HCT116 (cell line): ENCODE measurements at regions of chr11 and their contacts with region 1.

Region 1: GRCh38 chr11:73965076-73965860 is 14.4 kb downstream of the DNAJB13 start:
- DNase-seq: no peak
- ATAC-seq: no peak
- H3K4me3 ChIP-seq: no peak overlapping the region
- H3K27ac ChIP-seq: no peak overlapping the region
- H3K4me1 ChIP-seq: peaks cover 0 to 5% of the 10 kb centered on the region in 2 experiments; a peak in 2 of 4 replicates
- H3K27me3 ChIP-seq: no peaks in the 10 kb centered on the region
- CTCF ChIP-seq: no peak
- POLR2A ChIP-seq: no peak
- RAD21 ChIP-seq: no peak

Region 2: GRCh38 chr11:74090701-74091100 is 125.4 kb after region 1 on chr11:
- CTCF ChIA-PET with region 1: no interaction called
- POLR2A ChIA-PET with region 1: no interaction called
- RAD21 ChIA-PET with region 1: no interaction called
- intact Hi-C with region 1: loop called (anchors 5 kb)
- DNase-seq: no peak
- ATAC-seq: no peak
- H3K4me3 ChIP-seq: no peak overlapping the region
- H3K27ac ChIP-seq: no peak overlapping the region
- H3K4me1 ChIP-seq: no peaks in the 10 kb centered on the region
- H3K27me3 ChIP-seq: no peaks in the 10 kb centered on the region
- CTCF ChIP-seq: peak in 2 of 3 experiments; percentile 8 to 20; a peak in 1 of 6 replicates
- POLR2A ChIP-seq: no peak
- RAD21 ChIP-seq: peak; percentile 45; the same call in 1 of the 2 replicates

Region 3: DNA sequence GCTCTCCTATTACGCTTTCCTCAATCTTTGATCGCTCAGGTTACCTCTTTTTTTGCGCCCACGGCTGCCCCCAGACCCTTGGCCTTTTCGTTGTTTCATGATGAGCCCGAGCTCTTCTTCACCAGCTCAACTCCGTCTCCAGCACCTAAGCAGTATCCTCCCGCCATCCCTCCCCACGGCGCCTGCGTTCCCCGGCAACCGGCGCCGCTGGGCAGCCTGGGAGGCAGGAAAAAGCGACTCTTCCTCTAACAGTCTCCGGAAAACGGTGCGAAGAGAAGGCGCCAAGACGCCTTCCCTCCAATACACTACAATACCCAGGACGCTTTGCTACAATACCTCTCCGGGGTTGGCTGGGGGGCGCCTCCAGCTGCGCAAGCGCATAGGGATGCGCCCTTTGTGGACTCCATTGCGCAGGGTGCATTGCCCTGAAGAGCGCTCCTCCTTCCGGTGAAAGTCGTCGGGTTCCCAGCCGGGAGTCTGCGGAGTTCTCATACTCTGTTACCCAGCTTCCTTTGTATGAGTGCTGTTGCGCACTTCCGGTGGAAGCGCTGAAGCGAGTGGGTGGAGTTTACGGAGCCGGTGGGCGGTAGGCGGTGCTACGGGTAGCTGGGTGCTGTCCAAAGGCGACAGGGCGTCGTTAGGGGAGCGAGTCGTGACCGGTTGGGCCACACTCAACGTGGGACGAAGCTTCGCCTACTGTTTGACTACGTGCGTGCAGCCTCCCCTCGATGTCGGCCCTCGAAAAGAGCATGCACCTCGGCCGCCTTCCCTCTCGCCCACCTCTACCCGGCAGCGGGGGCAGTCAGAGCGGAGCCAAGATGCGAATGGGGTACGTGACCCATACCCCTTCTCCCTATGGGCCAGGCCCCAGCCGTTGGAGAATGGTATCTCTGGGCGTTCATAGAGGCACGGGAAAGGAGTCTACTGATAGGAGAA is 205.7 kb after region 1 on chr11 and contains the starts of genes C2CD3 and PPME1:
- CTCF ChIA-PET with region 1: no interaction called
- POLR2A ChIA-PET with region 1: no interaction called
- RAD21 ChIA-PET with region 1: no interaction called
- intact Hi-C with region 1: loop called (anchors 1 kb)
- DNase-seq: peak; percentile 99
- ATAC-seq: peak; percentile 95
- H3K4me3 ChIP-seq: peak within 1 kb of the TSS; percentile 86 to 94
- H3K27ac ChIP-seq: peak within 1 kb of the TSS; percentile 66
- H3K4me1 ChIP-seq: peaks cover 12 to 18% of the 10 kb centered on the region in 2 experiments; a peak in 2 of 4 replicates
- H3K27me3 ChIP-seq: no peaks in the 10 kb centered on the region
- CTCF ChIP-seq: no peak
- POLR2A ChIP-seq: peak; percentile 69
- RAD21 ChIP-seq: peak; percentile 54
- total RNA-seq, gene C2CD3: 30.6 TPM
- total RNA-seq, gene PPME1: 68.3 TPM

Region 4: GRCh38 chr11:74203966-74204365 is 238.7 kb after region 1 on chr11:
- CTCF ChIA-PET with region 1: no interaction called
- POLR2A ChIA-PET with region 1: no interaction called
- RAD21 ChIA-PET with region 1: no interaction called
- intact Hi-C with region 1: loop called (anchors 10 kb)
- DNase-seq: no peak
- ATAC-seq: no peak
- H3K4me3 ChIP-seq: no peak overlapping the region
- H3K27ac ChIP-seq: no peak overlapping the region
- H3K4me1 ChIP-seq: no peaks in the 10 kb centered on the region
- H3K27me3 ChIP-seq: no peaks in the 10 kb centered on the region
- CTCF ChIP-seq: no peak
- POLR2A ChIP-seq: no peak
- RAD21 ChIP-seq: no peak

Region 5: GRCh38 chr11:74255741-74256369 is 290.6 kb after region 1 on chr11:
- CTCF ChIA-PET with region 1: interaction called, 8 read pairs
- POLR2A ChIA-PET with region 1: no interaction called
- RAD21 ChIA-PET with region 1: no interaction called
- intact Hi-C with region 1: loop called (anchors 5 kb)
- DNase-seq: peak; percentile 29
- ATAC-seq: peak; percentile 77
- H3K4me3 ChIP-seq: no peak overlapping the region
- H3K27ac ChIP-seq: no peak overlapping the region
- H3K4me1 ChIP-seq: no peaks in the 10 kb centered on the region
- H3K27me3 ChIP-seq: no peaks in the 10 kb centered on the region
- CTCF ChIP-seq: peak; percentile 83 to 97 (median 93)
- POLR2A ChIP-seq: no peak
- RAD21 ChIP-seq: peak; percentile 87

Region 6: DNA sequence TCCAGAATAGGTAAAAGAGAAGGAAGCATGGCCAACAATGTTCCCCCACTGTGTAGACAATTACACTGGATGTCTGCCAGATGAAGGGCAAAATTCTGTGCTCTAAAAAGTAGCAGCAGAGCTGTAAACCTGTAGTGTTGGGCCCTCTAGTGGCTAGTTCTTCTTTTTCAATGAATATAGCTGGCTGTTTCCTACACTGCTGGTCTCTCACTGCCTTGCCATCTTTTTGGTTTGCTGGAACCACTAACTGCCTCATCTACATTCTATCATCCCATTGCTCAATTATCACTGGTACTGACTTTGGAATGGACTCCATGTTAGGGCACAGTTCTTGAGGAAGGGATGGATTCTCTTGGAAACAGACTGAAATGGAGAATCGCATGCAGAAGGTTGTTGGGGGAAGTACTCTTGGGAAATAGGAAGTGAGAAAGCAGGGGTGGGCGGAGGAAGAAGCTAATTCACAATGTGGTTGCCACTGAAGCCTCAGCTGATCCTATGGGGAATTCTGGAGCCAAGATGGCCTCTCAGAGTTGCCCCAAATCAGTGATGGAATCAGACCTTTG is 484.2 kb after region 1 on chr11:
- CTCF ChIA-PET with region 1: interaction called, 6 read pairs
- POLR2A ChIA-PET with region 1: no interaction called
- RAD21 ChIA-PET with region 1: interaction called in 1 of 2 experiments, 4 read pairs
- intact Hi-C with region 1: loop called (anchors 1 kb)
- DNase-seq: peak; percentile 57
- ATAC-seq: peak; percentile 82
- H3K4me3 ChIP-seq: no peak overlapping the region
- H3K27ac ChIP-seq: no peak overlapping the region
- H3K4me1 ChIP-seq: peaks cover 0 to 3% of the 10 kb centered on the region in 2 experiments; a peak in 1 of 4 replicates
- H3K27me3 ChIP-seq: no peaks in the 10 kb centered on the region
- CTCF ChIP-seq: peak; percentile 68 to 79 (median 74)
- POLR2A ChIP-seq: no peak
- RAD21 ChIP-seq: peak; percentile 96